ENCODE measurements at regions of chr11 and their contacts with region 1.

Region 1: GRCh38 chr11:118514103-118514502 is 13.2 kb upstream of the TTC36 start:
- DNase-seq: no peak
- CTCF ChIP-seq: no peak

Region 2: DNA sequence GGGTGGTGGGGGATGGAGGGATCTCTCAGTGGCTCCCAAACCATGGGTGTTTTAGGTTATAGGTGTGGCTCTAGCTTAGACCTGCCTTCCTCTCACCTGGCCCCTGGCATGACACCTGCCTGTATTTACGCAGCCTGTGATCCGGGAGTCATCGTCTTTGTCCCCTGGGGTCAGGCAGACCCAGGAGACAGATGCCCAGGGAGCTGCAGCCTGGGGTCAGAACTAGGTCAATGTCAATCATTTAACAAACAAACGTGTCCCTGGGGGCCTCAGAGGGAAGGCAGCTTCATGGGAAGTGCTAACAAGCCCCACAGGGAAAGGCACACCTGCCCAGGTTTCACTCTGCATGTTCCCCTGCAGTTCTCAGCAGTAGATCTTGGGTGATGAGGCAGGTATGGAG is 1211.0 kb before region 1 on chr11:
- CTCF ChIA-PET with region 1: no interaction called
- POLR2A ChIA-PET with region 1: interaction called, 10 read pairs
- DNase-seq: no peak
- CTCF ChIP-seq: no peak

Region 3: DNA sequence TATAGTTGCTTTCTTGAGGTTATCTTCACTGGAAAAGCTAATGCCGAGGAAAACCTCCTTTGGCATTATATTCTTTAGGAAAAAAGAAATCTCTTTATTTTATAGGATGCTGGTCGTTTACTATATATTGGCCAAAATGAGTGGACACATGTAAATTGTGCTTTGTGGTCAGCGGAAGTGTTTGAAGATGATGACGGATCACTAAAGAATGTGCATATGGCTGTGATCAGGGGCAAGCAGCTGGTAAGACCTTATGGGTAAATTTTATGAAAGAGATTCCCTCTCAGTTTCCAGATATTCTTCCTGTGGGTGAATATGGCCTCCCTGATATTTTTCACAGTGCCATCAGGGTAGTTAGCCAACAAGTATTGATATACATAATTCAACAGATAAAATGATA is 16.3 kb before region 1 on chr11:
- CTCF ChIA-PET with region 1: interaction called, 11 read pairs
- POLR2A ChIA-PET with region 1: no interaction called
- DNase-seq: no peak
- CTCF ChIP-seq: no peak

Measured in GM10248 (cell line).